Activated CD4-positive, alpha-beta memory T cell treated with anti-CD3 and anti-CD28 coated beads, Interleukin-2, amount 10 ng/mL, durations not matched to agents 7 days and 5 days (primary cell): ENCODE measurements at regions of chr7 and their contacts with region 1.

Region 1: DNA sequence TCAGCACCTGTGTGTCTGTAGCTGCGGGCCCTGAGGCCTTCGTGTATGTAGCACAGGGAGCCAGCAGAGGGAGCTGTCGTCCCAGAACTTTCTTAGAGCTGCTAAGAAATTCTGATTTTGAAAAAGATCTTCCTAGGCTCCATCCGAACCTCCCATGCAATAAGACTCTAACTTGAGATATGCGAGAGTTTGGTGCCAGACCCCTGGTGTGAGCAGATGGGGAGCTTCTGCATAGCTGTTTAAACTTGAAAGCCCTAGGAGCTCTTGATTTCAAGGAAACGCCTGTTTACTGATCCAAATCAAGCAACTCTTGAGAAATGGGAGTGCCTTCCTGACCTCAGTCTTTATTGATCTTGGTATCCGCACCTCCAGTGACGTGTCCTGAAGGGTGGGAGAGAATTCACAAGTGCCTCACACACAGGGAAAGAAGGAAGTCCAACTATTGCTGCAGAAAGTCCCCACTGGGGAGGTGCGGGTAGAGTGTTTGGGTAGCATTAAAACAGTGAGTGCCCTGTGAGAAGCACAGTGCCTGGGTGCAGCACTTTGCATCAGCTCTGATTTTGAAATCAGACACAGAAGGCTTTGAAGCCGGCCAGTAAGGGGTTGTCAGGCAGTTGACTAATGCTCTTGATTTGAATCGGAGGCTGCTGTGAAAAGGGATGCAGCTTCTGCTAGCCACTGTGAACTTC is 66.4 kb upstream of the STRIP2 start:
- DNase-seq: peak; percentile 87
- H3K4me3 Mint-ChIP-seq: peak overlapping the region; percentile 72
- H3K27ac Mint-ChIP-seq: peak overlapping the region; percentile 92
- H3K4me1 Mint-ChIP-seq: peaks cover 50% of the 10 kb centered on the region
- H3K27me3 Mint-ChIP-seq: no peaks in the 10 kb centered on the region

Region 2: GRCh38 chr7:129224251-129225205 is 143.3 kb before region 1 on chr7 and contains the start of gene AHCYL2:
- CTCF ChIA-PET with region 1: interaction called, 28 read pairs
- POLR2A ChIA-PET with region 1: interaction called, 3 read pairs
- DNase-seq: peak; percentile 98
- H3K4me3 Mint-ChIP-seq: peak within 1 kb of the TSS; percentile 87
- H3K27ac Mint-ChIP-seq: peak within 1 kb of the TSS; percentile 90
- H3K4me1 Mint-ChIP-seq: peaks cover 31% of the 10 kb centered on the region
- H3K27me3 Mint-ChIP-seq: no peaks in the 10 kb centered on the region
- total RNA-seq, gene AHCYL2: 18.5 to 21.0 TPM

Region 3: GRCh38 chr7:129389829-129390228 is 22.0 kb after region 1 on chr7:
- CTCF ChIA-PET with region 1: interaction called, 29 read pairs
- POLR2A ChIA-PET with region 1: interaction called, 3 read pairs
- DNase-seq: no peak
- H3K4me3 Mint-ChIP-seq: no peak overlapping the region
- H3K27ac Mint-ChIP-seq: no peak overlapping the region
- H3K4me1 Mint-ChIP-seq: peaks cover 26% of the 10 kb centered on the region
- H3K27me3 Mint-ChIP-seq: no peaks in the 10 kb centered on the region

Region 4: GRCh38 chr7:129468087-129468486 is 100.2 kb after region 1 on chr7:
- CTCF ChIA-PET with region 1: interaction called, 142 read pairs
- POLR2A ChIA-PET with region 1: interaction called, 10 read pairs
- DNase-seq: no peak
- H3K4me3 Mint-ChIP-seq: no peak overlapping the region
- H3K27ac Mint-ChIP-seq: no peak overlapping the region
- H3K4me1 Mint-ChIP-seq: peaks cover 12% of the 10 kb centered on the region
- H3K27me3 Mint-ChIP-seq: no peaks in the 10 kb centered on the region

Region 5: DNA sequence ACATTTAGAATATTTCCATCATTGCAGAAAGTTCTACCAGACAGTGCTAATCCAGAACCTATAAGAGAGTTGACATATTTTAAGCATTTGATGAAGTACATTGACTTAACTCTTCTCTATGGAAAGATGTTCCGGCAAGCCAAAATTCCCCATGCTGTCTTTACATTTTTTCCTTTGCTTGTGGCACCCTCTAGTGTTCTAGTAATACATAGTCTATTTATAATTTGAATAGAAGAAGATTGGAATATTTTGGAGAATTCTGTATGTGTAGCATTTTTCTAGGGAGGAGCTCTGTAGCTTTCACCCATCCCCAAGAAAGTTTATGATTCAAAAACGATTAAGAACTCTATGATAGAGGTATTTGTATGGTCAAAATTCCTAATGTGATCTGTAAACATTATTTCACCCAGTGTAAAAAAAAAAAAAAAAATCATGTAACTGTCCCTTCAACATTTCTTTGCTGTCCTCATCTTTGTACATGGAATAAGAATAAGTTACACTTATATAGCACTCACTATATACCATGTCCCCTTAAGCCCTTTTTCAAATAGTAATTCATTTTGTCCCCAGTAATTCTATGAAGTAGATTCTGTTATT is 276.9 kb after region 1 on chr7:
- CTCF ChIA-PET with region 1: interaction called, 27 read pairs
- POLR2A ChIA-PET with region 1: interaction called, 3 read pairs
- DNase-seq: no peak
- H3K4me3 Mint-ChIP-seq: no peak overlapping the region
- H3K27ac Mint-ChIP-seq: no peak overlapping the region
- H3K4me1 Mint-ChIP-seq: peaks cover 13% of the 10 kb centered on the region
- H3K27me3 Mint-ChIP-seq: no peaks in the 10 kb centered on the region

Region 6: DNA sequence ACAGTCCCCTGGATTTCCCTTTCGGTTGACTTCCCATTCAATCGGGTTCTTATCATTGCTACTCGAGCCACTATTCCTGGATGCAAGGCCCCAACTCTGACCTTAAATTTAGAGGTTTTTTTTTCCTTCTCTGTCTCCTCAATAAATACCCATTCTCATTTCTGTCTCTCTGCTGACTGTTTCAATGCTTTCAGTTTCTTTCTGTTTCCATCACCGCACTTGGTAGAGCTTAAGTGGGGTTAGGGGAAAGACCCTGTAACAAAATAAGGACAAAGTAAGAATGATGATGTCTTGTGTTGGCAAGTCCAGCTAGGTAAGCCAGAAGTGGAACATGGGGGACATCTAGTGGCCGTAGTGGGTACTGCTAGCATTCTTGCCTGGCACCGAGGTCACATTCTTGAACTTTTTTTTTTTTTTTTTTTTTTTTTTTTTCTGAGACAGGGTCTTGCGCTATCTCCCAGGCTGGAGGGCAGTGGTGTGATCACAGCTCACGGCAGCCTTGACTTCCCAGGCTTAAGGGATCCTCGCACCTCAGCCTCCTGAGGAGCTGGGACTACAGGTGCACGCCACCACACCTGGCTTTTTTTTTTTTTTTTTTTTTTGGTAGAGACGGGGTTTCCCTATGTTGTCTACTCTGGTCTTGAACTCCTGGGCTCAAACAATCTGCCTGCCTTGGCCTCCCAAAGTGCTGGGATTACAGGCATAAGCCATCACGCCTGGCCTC is 643.0 kb after region 1 on chr7:
- CTCF ChIA-PET with region 1: interaction called, 21 read pairs
- POLR2A ChIA-PET with region 1: no interaction called
- DNase-seq: peak; percentile 89
- H3K4me3 Mint-ChIP-seq: no peak overlapping the region
- H3K27ac Mint-ChIP-seq: peak overlapping the region; percentile 79
- H3K4me1 Mint-ChIP-seq: peaks cover 13% of the 10 kb centered on the region
- H3K27me3 Mint-ChIP-seq: no peaks in the 10 kb centered on the region